H1 (cell line): ENCODE measurements at regions of chr5 and their contacts with region 1.

Region 1: GRCh38 chr5:142674531-142675469 is 11.1 kb downstream of the FGF1 start:
- DNase-seq: no peak
- H3K4me3 ChIP-seq: no peak overlapping the region
- H3K27ac ChIP-seq: no peak overlapping the region
- H3K4me1 ChIP-seq: peaks cover 0 to 3% (median 0%) of the 10 kb centered on the region in 4 experiments; a peak in 1 of 7 replicates
- H3K27me3 ChIP-seq: no peaks in the 10 kb centered on the region; a peak in 2 of 7 replicates
- CTCF ChIP-seq: no peak
- EP300 ChIP-seq: no peak
- POLR2A ChIP-seq: no peak
- RAD21 ChIP-seq: no peak

Region 2: DNA sequence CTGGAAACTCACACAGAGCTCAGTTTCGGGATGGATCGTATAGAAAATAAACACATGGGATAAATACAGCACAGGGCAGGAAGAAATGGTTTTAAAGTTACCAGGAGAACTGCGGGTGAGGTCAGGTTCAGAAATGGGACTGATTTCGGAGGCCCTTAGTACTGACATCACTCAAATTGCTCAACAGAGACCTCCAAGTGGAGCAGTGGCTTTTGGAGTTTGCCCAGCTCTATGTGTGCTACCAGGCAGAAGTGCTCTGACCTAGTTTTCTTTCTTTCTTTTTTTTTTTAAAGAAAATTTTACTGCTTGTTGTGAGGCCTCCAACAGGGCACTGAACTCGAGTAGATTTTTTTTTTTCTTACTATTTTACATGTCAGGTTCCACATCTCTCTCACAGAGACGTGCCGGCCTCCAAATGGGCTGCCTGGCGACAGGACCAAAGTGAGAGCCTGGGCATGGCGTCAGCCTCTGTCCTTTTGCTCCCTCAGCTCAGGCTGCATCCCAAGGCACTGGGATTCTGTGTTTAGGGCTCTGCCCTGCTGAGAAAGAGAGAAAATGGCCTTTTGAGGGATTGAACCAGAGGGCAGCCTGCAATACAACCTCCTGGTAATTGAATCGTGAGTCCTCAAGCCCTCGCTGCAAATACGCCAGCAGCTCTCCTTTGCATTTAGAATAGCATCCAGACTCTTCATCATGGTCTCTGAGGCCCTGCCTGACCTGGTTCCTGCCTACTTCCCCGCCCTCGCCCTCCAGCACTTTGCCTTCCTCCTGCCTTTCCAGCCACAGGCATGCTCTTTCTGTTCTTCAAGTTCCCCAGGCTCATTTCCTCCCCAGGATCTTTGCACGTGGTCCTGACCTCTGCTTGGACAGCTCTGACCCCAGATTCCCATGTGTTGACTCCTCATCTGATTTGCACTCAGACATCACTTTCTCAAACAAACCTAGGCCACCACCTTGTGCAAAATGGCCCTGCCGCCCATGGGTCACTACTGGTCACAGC is 162.5 kb before region 1 on chr5:
- CTCF ChIA-PET with region 1: no interaction called
- POLR2A ChIA-PET with region 1: no interaction called
- DNase-seq: no peak
- H3K4me3 ChIP-seq: no peak overlapping the region
- H3K27ac ChIP-seq: no peak overlapping the region
- H3K4me1 ChIP-seq: peaks cover 0 to 14% (median 3%) of the 10 kb centered on the region in 4 experiments; a peak in 2 of 7 replicates
- H3K27me3 ChIP-seq: no peaks in the 10 kb centered on the region
- CTCF ChIP-seq: no peak
- EP300 ChIP-seq: no peak
- POLR2A ChIP-seq: no peak
- RAD21 ChIP-seq: no peak

Region 3: DNA sequence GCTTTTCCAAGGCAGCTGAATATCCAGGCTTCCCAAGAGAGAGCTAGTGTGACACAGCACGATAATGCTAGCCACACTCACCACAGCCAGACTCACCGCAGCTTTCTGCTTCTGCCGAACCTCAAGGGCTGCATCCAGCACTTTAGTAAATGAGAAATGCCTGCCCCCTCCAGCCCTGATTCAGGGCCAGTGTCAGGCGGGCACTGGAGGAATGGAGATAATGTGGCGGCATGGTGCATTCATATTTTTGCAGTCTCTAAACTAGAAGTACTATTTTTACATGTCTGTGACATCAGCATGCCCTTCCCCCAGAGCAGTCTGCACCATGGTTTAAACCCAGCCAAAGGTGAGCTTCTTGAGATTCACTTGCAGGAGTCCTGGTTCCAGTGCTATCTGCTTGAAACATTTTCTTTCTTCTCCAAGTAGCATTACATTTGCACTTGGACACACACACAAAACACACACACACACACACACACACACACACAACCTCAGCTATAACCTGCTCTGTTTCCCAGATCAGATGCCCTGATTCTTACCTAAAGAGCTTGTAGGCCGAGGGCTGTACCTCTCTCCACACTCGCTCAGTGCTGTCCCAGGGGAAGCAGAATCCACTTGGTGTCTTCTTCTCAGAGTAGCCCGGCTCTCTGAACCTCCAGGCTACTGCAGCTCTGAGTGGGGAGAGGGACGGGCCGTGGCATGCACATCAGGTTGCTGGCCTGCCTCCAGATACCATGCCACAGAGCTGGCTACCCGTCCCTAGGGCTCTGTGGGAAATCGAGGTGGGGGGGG is 10.8 kb after region 1 on chr5 and contains the start of gene FGF1:
- CTCF ChIA-PET with region 1: interaction called, 41 read pairs
- POLR2A ChIA-PET with region 1: interaction called, 3 read pairs
- DNase-seq: no peak
- H3K4me3 ChIP-seq: no peak within 1 kb of the TSS
- H3K27ac ChIP-seq: peak within 1 kb of the TSS; percentile 37
- H3K4me1 ChIP-seq: peaks cover 3 to 33% (median 23%) of the 10 kb centered on the region in 4 experiments
- H3K27me3 ChIP-seq: no peaks in the 10 kb centered on the region
- CTCF ChIP-seq: no peak
- EP300 ChIP-seq: no peak
- POLR2A ChIP-seq: no peak
- RAD21 ChIP-seq: no peak
- total RNA-seq, gene FGF1: 0.11 and 0.50 TPM in 2 replicates

Region 4: DNA sequence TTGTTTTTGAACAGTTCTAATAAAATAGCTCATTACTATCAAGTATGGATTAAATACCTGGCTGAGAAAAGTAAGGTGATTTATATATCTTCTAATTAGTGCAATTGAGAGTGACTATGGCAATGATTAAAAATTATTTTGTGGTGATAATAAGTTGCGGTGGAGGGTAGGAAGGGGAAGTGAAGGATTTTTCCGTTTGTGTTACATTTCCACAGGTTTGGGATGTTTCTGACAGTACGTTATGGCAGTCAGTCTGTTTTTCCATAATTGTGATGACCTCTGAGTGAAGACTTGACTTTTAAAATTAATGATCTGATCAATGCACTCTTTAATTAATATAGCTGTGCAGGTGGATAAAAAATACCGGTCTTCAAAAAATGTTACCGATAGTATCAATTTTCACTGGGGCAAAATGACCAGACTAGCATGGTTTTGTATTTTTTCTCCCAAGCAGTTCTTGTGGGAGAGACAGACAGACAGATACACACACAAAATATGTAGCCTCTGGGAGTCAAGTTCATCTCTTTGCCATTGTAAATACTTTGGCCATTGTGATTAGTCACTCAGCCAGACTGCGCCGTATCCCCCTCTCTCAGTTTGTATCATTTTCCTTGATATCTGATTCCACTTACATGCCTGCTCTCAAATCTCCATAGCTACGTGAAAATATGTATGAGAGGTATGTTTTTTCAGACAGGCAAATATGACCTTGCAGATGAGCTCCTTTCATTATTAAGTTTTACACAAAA is 155.6 kb after region 1 on chr5:
- CTCF ChIA-PET with region 1: no interaction called
- POLR2A ChIA-PET with region 1: no interaction called
- DNase-seq: no peak
- H3K4me3 ChIP-seq: no peak overlapping the region
- H3K27ac ChIP-seq: no peak overlapping the region
- H3K4me1 ChIP-seq: peaks cover 0 to 17% (median 7%) of the 10 kb centered on the region in 4 experiments; a peak in 5 of 7 replicates
- H3K27me3 ChIP-seq: no peaks in the 10 kb centered on the region
- CTCF ChIP-seq: no peak
- EP300 ChIP-seq: no peak
- POLR2A ChIP-seq: no peak
- RAD21 ChIP-seq: no peak

Region 5: DNA sequence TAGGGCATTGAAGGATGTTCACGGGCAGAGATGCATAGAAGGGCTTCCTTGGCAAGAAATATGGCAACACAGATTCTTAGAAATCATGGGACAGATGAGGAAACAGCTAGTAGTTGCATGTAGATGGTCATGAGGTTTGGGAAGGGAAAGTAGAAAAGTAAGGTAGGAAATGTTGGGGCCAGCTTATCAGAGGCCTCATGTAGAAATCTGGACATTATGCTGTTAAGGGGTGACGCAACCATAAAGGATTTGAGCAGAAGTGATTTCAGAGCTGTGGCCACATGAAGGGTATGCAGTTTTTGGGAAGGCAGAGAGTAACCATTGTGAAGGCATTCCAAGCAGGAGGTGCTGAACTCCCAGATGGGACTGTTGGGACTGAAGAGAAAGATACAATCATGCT is 319.4 kb after region 1 on chr5:
- CTCF ChIA-PET with region 1: no interaction called
- POLR2A ChIA-PET with region 1: no interaction called
- DNase-seq: no peak
- H3K4me3 ChIP-seq: no peak overlapping the region
- H3K27ac ChIP-seq: no peak overlapping the region
- H3K4me1 ChIP-seq: peaks cover 0 to 3% (median 0%) of the 10 kb centered on the region in 4 experiments; a peak in 1 of 7 replicates
- H3K27me3 ChIP-seq: peaks cover 0 to 2% (median 0%) of the 10 kb centered on the region in 4 experiments; a peak in 1 of 7 replicates
- CTCF ChIP-seq: no peak
- EP300 ChIP-seq: no peak
- POLR2A ChIP-seq: no peak
- RAD21 ChIP-seq: no peak